Tibial artery (tissue), 4 donors: ENCODE measurements at regions of chr1 and their contacts with region 1.

Region 1: GRCh38 chr1:904310-904950 is 19.3 kb upstream of the SAMD11 start:
- DNase-seq: peak; percentile 55 to 92
- H3K4me3 ChIP-seq: peak overlapping the region; percentile 44 to 49
- H3K27ac ChIP-seq: peak overlapping the region; percentile 39 to 52
- H3K4me1 ChIP-seq: peaks cover 0 to 32% (median 20%) of the 10 kb centered on the region in 4 donors
- H3K27me3 ChIP-seq: peaks cover 0 to 14% of the 10 kb centered on the region in 2 donors
- CTCF ChIP-seq: peak; percentile 94

Region 2: DNA sequence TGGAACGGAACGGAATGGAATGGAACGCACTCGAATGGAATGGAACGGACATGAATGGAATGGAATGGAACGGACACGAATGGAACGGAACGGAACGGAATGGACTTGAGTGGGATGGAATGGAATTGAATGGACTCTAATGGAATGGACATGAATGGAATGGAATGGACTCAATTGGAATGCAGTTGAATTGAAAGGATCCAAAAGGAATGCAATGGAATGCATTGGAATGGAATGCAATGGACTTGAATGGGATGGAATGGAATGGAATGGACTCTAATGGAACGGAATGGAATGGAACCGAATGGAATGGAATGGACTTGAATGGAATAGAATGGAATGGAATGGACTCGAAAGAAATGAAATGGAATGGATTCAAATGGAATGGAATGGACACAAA is 115.6 kb before region 1 on chr1:
- intact Hi-C with region 1: no loop called
- DNase-seq: no peak
- H3K4me3 ChIP-seq: no peak overlapping the region
- H3K27ac ChIP-seq: no peak overlapping the region
- H3K4me1 ChIP-seq: no peaks in the 10 kb centered on the region
- H3K27me3 ChIP-seq: no peaks in the 10 kb centered on the region
- CTCF ChIP-seq: no peak

Region 3: GRCh38 chr1:923131-923990 is 18.9 kb after region 1 on chr1 and contains the start of gene SAMD11:
- intact Hi-C with region 1: loop called (anchors 2 kb)
- DNase-seq: peak; percentile 82 to 90
- H3K4me3 ChIP-seq: peak within 1 kb of the TSS; percentile 50 to 66
- H3K27ac ChIP-seq: peak within 1 kb of the TSS; percentile 50 to 64
- H3K4me1 ChIP-seq: peaks cover 3 to 60% (median 46%) of the 10 kb centered on the region in 4 donors
- H3K27me3 ChIP-seq: peaks cover 0 to 63% of the 10 kb centered on the region in 2 donors
- CTCF ChIP-seq: no peak

Region 4: GRCh38 chr1:944341-945325 is 40.2 kb after region 1 on chr1:
- intact Hi-C with region 1: no loop called
- DNase-seq: no peak
- H3K4me3 ChIP-seq: no peak overlapping the region
- H3K27ac ChIP-seq: no peak overlapping the region
- H3K4me1 ChIP-seq: peaks cover 0 to 33% (median 32%) of the 10 kb centered on the region in 4 donors
- H3K27me3 ChIP-seq: peaks cover 0 to 36% of the 10 kb centered on the region in 2 donors
- CTCF ChIP-seq: no peak

Region 5: GRCh38 chr1:960040-960756 is 55.8 kb after region 1 on chr1 and contains the start of gene KLHL17:
- intact Hi-C with region 1: loop called (anchors 5 kb)
- DNase-seq: peak; percentile 65 to 83
- H3K4me3 ChIP-seq: peak within 1 kb of the TSS; percentile 98 to 100
- H3K27ac ChIP-seq: peak within 1 kb of the TSS; percentile 49 to 75
- H3K4me1 ChIP-seq: peaks cover 0 to 41% (median 31%) of the 10 kb centered on the region in 4 donors
- H3K27me3 ChIP-seq: no peaks in the 10 kb centered on the region
- CTCF ChIP-seq: no peak

Region 6: GRCh38 chr1:970242-970972 is 66.0 kb after region 1 on chr1:
- intact Hi-C with region 1: no loop called
- DNase-seq: no peak
- H3K4me3 ChIP-seq: no peak overlapping the region
- H3K27ac ChIP-seq: no peak overlapping the region
- H3K4me1 ChIP-seq: peaks cover 0 to 30% (median 14%) of the 10 kb centered on the region in 4 donors
- H3K27me3 ChIP-seq: peaks cover 0 to 77% of the 10 kb centered on the region in 2 donors
- CTCF ChIP-seq: no peak

Region 7: DNA sequence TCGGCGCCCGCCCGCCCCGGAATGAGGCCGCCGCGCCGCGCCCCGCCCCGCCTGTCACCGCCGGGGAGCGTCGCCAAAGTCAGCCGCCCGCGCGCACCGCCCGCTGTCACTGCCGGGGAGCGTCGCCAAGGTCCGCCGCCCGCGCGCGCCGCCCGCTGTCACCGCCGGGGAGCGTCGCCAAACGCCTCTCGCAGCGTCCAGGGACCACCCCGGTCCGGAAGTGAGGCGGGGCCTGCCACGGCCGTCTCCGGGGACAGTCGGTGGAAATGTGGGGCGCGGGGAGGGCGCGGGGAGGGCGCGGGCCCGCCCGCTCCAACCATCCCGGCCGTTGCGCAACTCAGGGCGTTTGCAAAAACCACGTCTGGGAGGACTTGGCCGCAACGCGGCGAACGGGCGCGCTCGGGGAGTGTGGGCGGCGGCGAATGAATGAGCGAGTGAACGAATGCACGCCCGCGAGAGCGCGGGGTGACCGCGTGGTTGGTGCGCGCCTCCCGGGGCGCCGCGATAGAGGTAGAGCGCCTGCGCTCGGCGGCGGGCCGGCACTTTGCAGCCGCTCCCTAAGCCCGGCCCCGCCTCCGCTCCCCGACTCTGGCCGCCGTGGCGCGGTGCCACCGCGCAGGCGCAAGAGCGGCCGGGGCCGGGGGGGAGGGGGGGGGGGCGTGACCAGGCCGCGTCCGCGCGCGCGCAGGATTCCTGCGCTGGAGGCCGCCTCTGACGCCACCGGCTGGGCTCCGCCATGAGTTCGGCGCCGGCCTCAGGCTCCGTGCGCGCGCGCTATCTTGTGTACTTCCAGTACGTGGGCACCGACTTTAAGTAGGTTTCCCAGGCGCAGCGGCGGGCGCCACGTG is 403.7 kb after region 1 on chr1 and contains the starts of genes ACAP3 and PUSL1:
- intact Hi-C with region 1: no loop called
- DNase-seq: peak; percentile 91 to 95
- H3K4me3 ChIP-seq: peak within 1 kb of the TSS; percentile 80 to 94
- H3K27ac ChIP-seq: peak within 1 kb of the TSS; percentile 92 to 97
- H3K4me1 ChIP-seq: peaks cover 0 to 58% (median 49%) of the 10 kb centered on the region in 4 donors
- H3K27me3 ChIP-seq: no peaks in the 10 kb centered on the region
- CTCF ChIP-seq: peak in 1 of 2 experiments; percentile 7